ENCODE measurements at regions of chr14 and their contacts with region 1.

Region 1: GRCh38 chr14:61355892-61356325 is 34.5 kb downstream of the PRKCH start:
- DNase-seq: peak; percentile 100
- H3K4me3 ChIP-seq: peak overlapping the region in 1 of 3 experiments; percentile 7
- H3K27ac ChIP-seq: peak overlapping the region; percentile 85
- H3K4me1 ChIP-seq: peaks cover 57% of the 10 kb centered on the region
- H3K27me3 ChIP-seq: no peaks in the 10 kb centered on the region
- CTCF ChIP-seq: no peak
- POLR2A ChIP-seq: peak; percentile 82

Region 2: DNA sequence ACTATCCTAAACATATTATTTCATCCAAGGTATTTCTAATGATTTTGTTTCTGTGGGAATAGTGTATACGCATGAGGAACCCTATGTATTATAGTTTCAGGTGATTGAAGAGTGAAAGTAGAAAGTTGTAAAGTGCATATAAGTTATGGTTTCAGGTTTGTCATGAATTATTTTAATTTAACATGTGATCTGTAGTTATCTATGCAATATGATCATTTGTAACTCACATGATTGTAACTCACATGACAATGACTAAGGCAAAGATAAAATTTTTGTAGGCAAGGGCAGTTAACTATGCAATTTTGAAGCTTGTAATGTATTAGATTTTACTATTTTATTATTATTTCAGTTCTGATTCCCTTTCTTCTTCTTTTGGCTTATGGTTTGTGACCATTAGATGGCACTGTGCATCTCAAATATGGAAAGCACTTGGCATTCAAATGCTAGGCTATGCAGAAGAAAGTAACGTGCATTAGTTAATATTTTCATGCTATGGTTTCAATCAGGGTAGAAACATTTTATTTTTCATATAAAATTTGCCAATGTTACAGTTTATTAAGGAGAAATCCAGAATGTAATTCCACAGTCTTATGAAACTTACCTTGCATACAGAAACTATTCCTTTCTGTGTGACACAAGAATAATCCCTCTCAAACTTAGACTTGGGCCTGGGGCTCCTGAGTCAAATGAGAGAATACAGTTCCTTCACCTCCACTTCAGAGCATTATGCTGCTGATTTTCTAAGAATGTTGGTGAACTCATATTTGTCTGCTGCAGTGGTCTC is 59.0 kb before region 1 on chr14:
- CTCF ChIA-PET with region 1: interaction called, 5 read pairs
- POLR2A ChIA-PET with region 1: no interaction called
- dilution Hi-C with region 1: no loop called
- intact Hi-C with region 1: loop called (anchors 1 kb)
- DNase-seq: peak; percentile 77
- H3K4me3 ChIP-seq: no peak overlapping the region
- H3K27ac ChIP-seq: peak overlapping the region; percentile 47
- H3K4me1 ChIP-seq: peaks cover 29% of the 10 kb centered on the region
- H3K27me3 ChIP-seq: no peaks in the 10 kb centered on the region
- CTCF ChIP-seq: peak; percentile 40 to 51
- POLR2A ChIP-seq: no peak

Region 3: GRCh38 chr14:61321385-61322010 is 34.4 kb before region 1 on chr14 and contains the start of gene PRKCH:
- CTCF ChIA-PET with region 1: interaction called, 3 read pairs
- POLR2A ChIA-PET with region 1: interaction called, 3 read pairs
- dilution Hi-C with region 1: no loop called
- intact Hi-C with region 1: loop called (anchors 1 kb)
- DNase-seq: peak; percentile 92
- H3K4me3 ChIP-seq: peak within 1 kb of the TSS; percentile 55 to 90 (median 68)
- H3K27ac ChIP-seq: peak within 1 kb of the TSS; percentile 66
- H3K4me1 ChIP-seq: peaks cover 23% of the 10 kb centered on the region
- H3K27me3 ChIP-seq: no peaks in the 10 kb centered on the region
- CTCF ChIP-seq: peak; percentile 12 to 40
- POLR2A ChIP-seq: peak; percentile 49
- total RNA-seq, gene PRKCH: 101 and 103 TPM in 2 replicates

Region 4: DNA sequence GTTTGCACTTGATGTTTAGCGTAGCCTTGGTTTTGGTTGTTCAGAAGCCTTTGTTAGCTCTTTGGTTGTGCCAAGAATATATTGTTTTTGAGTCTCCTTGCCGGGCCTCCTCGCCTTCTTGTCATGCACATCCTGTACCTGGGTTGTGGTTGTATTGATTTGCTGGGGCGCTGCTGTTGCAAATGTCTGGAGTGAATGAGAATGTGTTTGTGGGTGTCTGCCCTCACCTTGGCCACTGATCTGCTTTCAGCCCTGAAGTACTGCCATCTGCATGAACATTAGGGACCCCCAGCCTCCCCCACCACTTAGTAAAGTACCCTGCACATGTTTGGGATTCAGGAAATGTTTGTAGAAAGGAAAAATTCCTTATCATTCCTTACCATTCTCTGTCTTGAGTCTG is 18.0 kb before region 1 on chr14:
- CTCF ChIA-PET with region 1: interaction called, 4 read pairs
- POLR2A ChIA-PET with region 1: no interaction called
- dilution Hi-C with region 1: no loop called
- intact Hi-C with region 1: loop called (anchors 1 kb)
- DNase-seq: peak; percentile 86
- H3K4me3 ChIP-seq: no peak overlapping the region
- H3K27ac ChIP-seq: peak overlapping the region; percentile 93
- H3K4me1 ChIP-seq: peaks cover 74% of the 10 kb centered on the region
- H3K27me3 ChIP-seq: no peaks in the 10 kb centered on the region
- CTCF ChIP-seq: no peak
- POLR2A ChIP-seq: no peak

Region 5: GRCh38 chr14:61374284-61374683 is 18.4 kb after region 1 on chr14:
- CTCF ChIA-PET with region 1: no interaction called
- POLR2A ChIA-PET with region 1: no interaction called
- dilution Hi-C with region 1: no loop called
- intact Hi-C with region 1: no loop called
- DNase-seq: no peak
- H3K4me3 ChIP-seq: no peak overlapping the region
- H3K27ac ChIP-seq: no peak overlapping the region
- H3K4me1 ChIP-seq: no peaks in the 10 kb centered on the region
- H3K27me3 ChIP-seq: no peaks in the 10 kb centered on the region
- CTCF ChIP-seq: no peak
- POLR2A ChIP-seq: no peak

Region 6: DNA sequence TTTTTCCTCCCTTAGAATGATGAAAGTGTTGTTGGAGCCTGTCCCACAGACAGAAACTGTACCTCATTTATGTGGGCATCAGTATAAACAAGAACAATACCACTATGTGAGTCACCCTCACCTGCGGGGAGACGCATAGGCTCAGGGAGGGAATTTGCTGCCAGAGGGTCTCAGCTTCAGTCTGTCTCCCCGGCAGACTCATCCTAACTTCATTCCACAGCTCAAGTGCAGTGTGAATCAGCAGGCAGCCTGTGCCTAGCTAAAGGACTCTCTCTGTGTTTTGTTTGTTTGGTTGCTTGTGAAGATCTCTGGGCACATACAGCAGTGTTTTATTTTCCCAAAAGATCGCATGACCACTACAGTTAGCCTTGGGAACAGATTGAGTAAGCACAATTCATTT is 64.4 kb after region 1 on chr14:
- CTCF ChIA-PET with region 1: no interaction called
- POLR2A ChIA-PET with region 1: no interaction called
- dilution Hi-C with region 1: no loop called
- intact Hi-C with region 1: loop called (anchors 1 kb)
- DNase-seq: peak; percentile 43
- H3K4me3 ChIP-seq: no peak overlapping the region
- H3K27ac ChIP-seq: no peak overlapping the region
- H3K4me1 ChIP-seq: peaks cover 46% of the 10 kb centered on the region
- H3K27me3 ChIP-seq: no peaks in the 10 kb centered on the region
- CTCF ChIP-seq: no peak
- POLR2A ChIP-seq: no peak

Region 7: DNA sequence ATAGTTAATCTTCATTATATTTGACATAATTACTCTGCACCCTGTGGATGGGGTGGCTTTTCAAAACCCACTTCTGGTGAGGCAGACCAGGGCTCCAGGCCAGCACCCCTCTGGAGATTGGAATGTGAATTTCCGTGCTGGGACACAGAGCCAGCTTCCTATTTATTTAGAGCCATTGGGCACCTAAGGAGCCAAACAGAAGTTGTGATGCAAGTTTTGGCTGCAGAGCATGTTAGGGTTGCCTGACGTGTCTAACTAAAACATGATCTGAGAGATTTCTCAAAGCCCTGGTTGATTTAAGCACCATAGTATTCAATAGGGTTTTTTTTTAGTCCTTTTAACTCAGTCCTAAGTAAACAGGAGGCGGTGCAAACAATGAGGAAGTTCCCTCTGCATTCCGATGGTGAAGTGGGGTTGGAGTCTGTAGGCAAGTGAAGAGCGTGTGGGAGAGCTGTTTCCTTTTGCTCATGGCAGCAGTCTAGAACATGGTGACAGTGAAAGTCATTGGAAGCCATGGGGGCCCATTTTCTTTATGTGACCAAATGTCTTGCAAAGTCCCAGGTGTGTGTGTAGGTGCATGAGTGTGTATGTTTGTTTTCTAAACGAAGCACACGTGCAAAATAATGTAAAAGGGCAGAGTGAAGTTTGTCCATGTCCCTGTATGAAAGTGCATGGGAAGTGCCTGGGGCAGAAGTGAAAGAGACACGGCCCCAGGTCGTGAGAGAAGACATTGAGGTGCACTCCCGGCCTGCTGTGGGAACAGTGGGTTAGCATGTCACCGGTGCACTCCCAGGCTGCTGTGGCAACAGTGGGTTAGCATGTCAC is 83.2 kb after region 1 on chr14:
- CTCF ChIA-PET with region 1: no interaction called
- POLR2A ChIA-PET with region 1: no interaction called
- dilution Hi-C with region 1: no loop called
- intact Hi-C with region 1: loop called (anchors 2 kb)
- DNase-seq: peak; percentile 91
- H3K4me3 ChIP-seq: peak overlapping the region in 1 of 3 experiments; percentile 0
- H3K27ac ChIP-seq: peak overlapping the region; percentile 39
- H3K4me1 ChIP-seq: peaks cover 43% of the 10 kb centered on the region
- H3K27me3 ChIP-seq: no peaks in the 10 kb centered on the region
- CTCF ChIP-seq: no peak
- POLR2A ChIP-seq: peak; percentile 25

Region 8: DNA sequence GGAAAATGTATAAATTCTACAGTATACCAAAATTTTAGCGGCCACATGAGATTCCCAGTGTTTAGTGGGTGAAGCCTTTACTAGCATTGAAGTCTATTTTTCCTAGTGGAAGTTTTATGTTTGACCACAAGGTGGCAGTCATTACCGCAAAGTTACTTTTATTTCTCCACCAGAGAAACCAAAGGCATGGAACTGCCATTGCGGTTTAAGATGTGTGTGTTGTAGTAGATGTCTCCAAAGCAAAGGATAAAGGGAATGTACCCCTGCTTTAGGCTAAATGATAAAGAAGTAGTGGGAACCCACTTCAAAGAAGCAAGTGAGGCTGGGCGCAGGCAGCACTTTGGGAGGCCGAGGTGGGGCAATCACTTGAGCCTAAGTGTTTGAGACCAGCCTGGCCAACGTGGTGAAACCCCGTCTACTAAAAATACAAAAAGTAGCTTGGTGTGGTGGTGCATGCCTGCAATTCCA is 105.9 kb after region 1 on chr14:
- CTCF ChIA-PET with region 1: no interaction called
- POLR2A ChIA-PET with region 1: no interaction called
- dilution Hi-C with region 1: no loop called
- intact Hi-C with region 1: loop called (anchors 1 kb)
- DNase-seq: peak; percentile 80
- H3K4me3 ChIP-seq: no peak overlapping the region
- H3K27ac ChIP-seq: no peak overlapping the region
- H3K4me1 ChIP-seq: peaks cover 26% of the 10 kb centered on the region
- H3K27me3 ChIP-seq: no peaks in the 10 kb centered on the region
- CTCF ChIP-seq: peak; percentile 35 to 43
- POLR2A ChIP-seq: no peak

Measured in endothelial cell of umbilical vein (primary cell).